Activated T-helper 1 cell treated with anti-CD3 and anti-CD28 coated beads, Interleukin-12 subunit alpha, Interleukin-12 subunit beta, Interleukin-2, Interleukin-4 antibody, amounts not matched to agents 30 ng/mL and 10 ng/mL and 1 ng/mL, durations not matched to agents 14 hours and 24 hours and 36 hours (primary cell): ENCODE measurements at regions of chr13 and their contacts with region 1.

Region 1: DNA sequence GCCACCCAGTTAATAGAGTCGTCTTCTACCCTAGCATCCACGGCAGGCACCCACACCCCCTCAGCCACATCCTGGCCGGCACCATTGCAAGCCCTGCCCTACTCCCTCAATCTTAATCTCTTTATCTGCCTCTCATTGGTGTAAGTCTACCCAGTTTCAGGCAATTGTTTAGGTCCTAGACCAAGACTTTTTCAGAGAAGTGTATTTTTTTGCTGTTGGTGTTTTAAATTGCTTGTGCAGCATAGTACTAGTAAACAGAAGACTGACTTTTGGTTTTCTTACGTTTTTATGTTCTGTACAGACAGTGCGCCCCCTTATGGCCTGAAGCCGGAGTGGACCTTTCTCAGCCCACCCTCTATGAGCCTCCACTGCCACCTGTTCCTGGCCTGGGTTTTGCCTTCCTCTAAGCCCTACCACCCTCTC is 2.3 kb upstream of the LCP1 start:
- DNase-seq: peak; percentile 64
- H3K4me3 Mint-ChIP-seq: peak overlapping the region; percentile 97
- H3K27ac Mint-ChIP-seq: peak overlapping the region; percentile 99
- H3K4me1 Mint-ChIP-seq: peaks cover 39% of the 10 kb centered on the region
- H3K27me3 Mint-ChIP-seq: no peaks in the 10 kb centered on the region

Region 2: GRCh38 chr13:46168341-46168740 is 15.9 kb before region 1 on chr13:
- intact Hi-C with region 1: loop called (anchors 1 kb)
- DNase-seq: no peak
- H3K4me3 Mint-ChIP-seq: peak overlapping the region; percentile 79
- H3K27ac Mint-ChIP-seq: peak overlapping the region; percentile 89
- H3K4me1 Mint-ChIP-seq: peaks cover 92% of the 10 kb centered on the region
- H3K27me3 Mint-ChIP-seq: no peaks in the 10 kb centered on the region

Region 3: DNA sequence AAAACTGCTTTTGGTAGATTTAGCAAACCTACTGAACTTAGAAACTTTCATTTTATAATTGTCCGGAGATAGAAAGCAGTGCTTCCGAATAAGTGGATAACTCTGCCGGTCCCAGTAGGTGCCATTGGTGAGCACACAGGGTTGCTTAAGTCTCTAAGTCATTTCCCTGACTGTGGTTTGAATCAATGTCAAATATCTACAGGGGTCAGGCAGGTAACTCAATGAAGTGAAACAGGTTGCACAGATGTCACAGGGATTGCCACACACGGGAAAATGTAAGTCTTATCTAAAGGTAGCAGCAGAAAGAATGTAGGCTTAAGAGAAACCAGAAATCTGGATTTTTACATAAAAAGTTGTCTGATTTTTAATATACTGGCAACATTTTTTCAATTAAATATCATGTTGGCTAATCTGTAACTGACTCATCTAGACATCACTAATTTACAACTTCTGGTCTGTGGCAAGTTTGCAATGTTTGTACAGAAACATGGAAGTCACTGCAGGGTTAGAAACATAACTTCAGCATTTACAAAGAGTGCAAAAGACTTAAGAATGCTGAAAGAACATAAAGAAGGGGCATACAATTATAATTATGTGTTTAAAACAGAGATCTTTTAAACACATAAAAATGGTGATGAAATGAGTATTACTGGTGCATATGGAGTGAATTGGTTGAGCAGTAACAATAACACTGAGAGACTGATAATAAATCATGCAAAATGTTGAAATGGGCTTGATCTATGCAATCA is 13.2 kb after region 1 on chr13:
- intact Hi-C with region 1: no loop called
- DNase-seq: no peak
- H3K4me3 Mint-ChIP-seq: no peak overlapping the region
- H3K27ac Mint-ChIP-seq: no peak overlapping the region
- H3K4me1 Mint-ChIP-seq: peaks cover 26% of the 10 kb centered on the region
- H3K27me3 Mint-ChIP-seq: no peaks in the 10 kb centered on the region

Region 4: DNA sequence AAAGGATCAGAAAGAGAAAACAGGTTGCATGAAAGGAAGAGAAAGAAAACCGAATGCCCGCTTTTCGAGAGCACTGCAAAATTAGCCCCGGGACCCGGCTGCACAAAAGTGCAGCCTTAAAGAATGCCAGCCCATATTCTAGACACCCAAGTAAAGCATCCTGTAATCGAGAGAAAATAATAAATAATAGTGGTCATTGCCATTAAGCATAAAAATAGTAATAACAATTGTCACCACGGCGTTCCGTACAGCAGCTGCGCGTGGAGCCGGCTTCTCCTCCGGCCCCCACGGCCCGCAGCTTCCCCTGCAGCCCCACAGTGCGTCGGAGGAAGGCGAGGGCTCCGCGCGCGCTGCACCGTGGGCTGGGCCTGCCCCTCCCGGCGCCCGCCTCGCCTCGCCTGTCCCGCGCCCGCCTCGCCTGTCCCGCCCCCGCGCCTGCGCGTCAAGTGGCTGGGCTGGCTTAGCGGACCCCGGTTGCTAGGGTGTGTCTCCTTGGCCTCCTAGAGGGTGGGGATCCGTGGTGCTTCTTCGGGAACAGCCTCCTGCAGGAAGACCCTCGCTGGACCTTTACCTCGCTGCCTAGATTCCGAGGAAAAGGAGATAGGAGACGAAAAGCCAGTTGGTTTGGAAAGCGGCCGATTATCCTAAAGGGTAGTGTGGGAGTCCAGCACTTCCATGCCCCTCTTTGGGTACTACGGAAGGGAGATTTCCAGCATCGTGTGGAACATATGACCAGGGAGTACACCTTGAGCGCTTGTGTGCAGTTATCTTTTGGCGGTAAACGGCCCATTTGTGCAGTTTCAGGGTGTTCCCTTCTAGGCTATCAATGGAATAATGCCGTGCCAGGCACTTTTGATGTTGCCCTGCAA is 27.4 kb after region 1 on chr13 and contains the start of gene LRRC63:
- intact Hi-C with region 1: loop called (anchors 1 kb)
- DNase-seq: peak; percentile 85
- H3K4me3 Mint-ChIP-seq: peak within 1 kb of the TSS; percentile 84
- H3K27ac Mint-ChIP-seq: peak within 1 kb of the TSS; percentile 87
- H3K4me1 Mint-ChIP-seq: peaks cover 26% of the 10 kb centered on the region
- H3K27me3 Mint-ChIP-seq: peaks cover 1% of the 10 kb centered on the region
- total RNA-seq, gene LRRC63: 0.13 and 0.17 TPM in 2 replicates

Region 5: GRCh38 chr13:46235286-46235685 is 51.0 kb after region 1 on chr13:
- intact Hi-C with region 1: no loop called
- DNase-seq: no peak
- H3K4me3 Mint-ChIP-seq: no peak overlapping the region
- H3K27ac Mint-ChIP-seq: no peak overlapping the region
- H3K4me1 Mint-ChIP-seq: no peaks in the 10 kb centered on the region
- H3K27me3 Mint-ChIP-seq: peaks cover 10% of the 10 kb centered on the region

Region 6: DNA sequence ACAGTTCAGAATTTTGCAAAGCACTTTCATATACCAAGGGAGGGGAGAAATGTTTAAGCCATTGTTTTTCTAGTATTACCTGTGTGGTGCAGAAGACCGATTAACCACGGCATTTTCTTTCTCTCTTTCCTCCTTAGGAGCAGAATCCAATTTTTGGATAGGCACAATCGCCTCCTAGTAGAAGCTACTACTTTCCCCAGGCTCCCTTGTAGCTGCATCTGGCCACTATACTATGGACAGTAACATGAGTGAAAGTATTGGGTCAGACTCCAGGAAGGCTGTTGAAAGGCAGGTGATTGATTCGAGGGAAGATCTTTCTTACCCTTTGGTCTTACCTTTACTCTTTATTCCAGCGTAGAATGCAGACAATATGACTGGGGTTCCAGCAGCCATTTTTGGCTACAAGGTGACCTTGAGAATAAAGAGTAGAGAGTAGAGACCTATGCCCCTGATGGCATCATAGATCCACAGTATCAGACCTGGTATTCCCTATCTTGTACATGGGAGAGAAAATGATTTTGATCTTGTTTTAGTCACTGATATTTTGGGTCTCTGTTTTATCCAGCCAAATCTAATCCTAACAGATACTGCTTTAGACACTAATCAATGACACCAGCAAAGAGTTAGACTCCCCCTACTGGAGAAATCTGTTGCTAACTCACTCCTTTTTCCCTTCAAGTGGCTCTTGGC is 104.4 kb after region 1 on chr13:
- intact Hi-C with region 1: loop called (anchors 1 kb)
- DNase-seq: no peak
- H3K4me3 Mint-ChIP-seq: no peak overlapping the region
- H3K27ac Mint-ChIP-seq: no peak overlapping the region
- H3K4me1 Mint-ChIP-seq: peaks cover 26% of the 10 kb centered on the region
- H3K27me3 Mint-ChIP-seq: peaks cover 5% of the 10 kb centered on the region